MCF 10A (cell line): ENCODE measurements at regions of chr12 and their contacts with region 1.

Region 1: DNA sequence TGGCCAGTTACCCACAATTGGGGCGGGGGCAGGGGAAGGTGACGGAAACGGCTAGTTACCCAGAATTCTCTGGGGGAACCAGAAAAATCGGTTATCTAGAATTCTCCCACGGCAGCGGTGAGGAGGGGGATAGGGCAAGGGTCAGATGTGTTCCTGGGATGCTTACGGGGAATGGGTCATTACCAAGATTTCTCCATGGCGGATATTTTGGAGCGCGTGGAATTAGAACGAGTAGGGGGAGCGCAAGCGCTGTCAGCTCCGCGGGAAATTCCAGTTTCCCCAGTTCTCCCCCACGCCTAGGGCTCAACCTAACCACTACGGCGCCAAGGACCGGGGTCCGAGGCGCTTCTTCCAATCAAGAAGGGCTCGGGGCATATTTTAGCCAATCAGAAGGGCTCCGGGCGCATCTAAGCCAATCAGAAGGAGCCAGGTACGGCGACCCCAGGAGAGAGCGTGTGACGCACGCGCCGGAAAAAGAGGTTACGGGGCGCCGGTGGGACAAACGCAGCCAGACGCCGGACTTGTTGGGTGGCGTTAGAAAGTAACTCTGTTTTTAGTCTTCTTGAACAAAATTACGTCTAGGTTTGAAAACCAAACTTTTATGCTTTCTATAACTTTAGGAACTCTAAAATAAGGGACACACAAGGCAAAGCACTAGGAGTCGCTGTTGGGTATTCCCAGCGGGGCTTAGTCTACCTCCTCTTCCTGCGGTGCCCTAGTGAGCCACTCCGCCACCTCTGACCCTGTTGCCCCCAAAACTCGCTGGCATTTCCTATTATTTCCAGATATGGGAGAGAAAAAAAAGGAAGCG is at the start of gene PAN2:
- DNase-seq: peak; percentile 99
- H3K4me3 Mint-ChIP-seq: peak within 1 kb of the TSS; percentile 83
- H3K27ac Mint-ChIP-seq: peak within 1 kb of the TSS; percentile 98
- H3K4me1 Mint-ChIP-seq: peaks cover 21% of the 10 kb centered on the region
- H3K27me3 Mint-ChIP-seq: no peaks in the 10 kb centered on the region
- CTCF ChIP-seq: peak; percentile 60
- total RNA-seq, gene PAN2: 72.9 and 80.1 TPM in 2 replicates

Region 2: DNA sequence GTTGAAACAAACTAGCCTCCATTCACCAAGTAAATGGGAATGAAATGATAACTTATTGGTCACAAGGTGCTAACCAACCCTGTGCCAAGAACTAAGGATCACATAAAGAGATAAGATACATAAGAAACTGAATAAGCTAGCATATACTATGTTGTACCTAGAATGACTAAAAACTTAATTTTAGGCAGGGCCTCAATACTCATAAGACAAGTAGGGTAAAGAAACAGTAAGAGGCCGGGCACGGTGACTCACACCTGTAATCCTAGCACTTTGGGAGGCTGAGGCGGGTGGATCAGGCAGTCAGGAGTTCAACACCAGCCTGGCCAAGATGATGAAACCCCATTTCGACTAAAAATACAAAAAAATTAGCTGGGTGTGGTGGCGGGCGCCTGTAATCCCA is 573.2 kb before region 1 on chr12:
- CTCF ChIA-PET with region 1: no interaction called
- POLR2A ChIA-PET with region 1: no interaction called
- intact Hi-C with region 1: no loop called
- DNase-seq: no peak
- H3K4me3 Mint-ChIP-seq: no peak overlapping the region
- H3K27ac Mint-ChIP-seq: no peak overlapping the region
- H3K4me1 Mint-ChIP-seq: peaks cover 6% of the 10 kb centered on the region
- H3K27me3 Mint-ChIP-seq: no peaks in the 10 kb centered on the region
- CTCF ChIP-seq: no peak

Region 3: DNA sequence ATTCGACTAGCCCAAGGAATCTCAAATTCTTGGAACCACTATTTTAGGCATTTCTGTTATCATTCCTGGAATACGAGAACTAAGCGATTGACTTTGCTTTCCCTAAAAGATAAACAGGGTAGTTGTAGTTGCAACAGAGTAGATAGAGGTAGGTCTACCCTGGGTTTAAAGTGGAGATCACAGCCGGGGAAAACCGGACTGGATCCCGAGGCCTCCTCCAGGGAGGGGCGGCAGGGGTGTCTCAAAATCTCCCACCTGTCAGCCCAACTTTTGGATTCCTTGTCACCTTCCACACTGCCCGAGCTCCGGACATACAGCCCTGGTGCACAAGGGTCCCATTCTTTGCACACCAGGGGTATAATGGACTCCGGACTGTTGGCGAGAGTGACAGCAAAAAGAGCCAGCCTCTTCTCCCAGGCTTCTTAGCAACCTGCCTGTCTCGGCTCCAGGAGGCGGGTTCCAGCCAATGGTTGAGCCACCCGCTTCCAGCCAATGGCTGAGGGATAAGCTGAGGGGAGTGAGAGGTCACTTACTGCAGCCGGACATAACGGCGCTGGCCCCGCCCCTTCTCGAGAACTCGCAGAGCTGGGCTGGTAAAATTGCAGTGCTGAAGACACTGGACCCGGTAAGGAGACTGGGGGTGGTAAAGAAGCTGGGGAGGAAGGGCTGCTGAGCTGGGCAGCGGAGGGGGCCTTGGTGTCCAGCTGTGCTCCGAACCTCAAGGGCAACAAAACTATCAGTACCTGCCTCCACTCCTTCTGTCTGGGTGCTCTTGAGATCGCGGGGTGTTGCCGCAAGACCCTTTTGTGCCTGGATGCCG is 337.0 kb before region 1 on chr12 and contains the start of gene SUOX:
- CTCF ChIA-PET with region 1: no interaction called
- POLR2A ChIA-PET with region 1: no interaction called
- intact Hi-C with region 1: no loop called
- DNase-seq: peak; percentile 98
- H3K4me3 Mint-ChIP-seq: peak within 1 kb of the TSS; percentile 92
- H3K27ac Mint-ChIP-seq: peak within 1 kb of the TSS; percentile 28
- H3K4me1 Mint-ChIP-seq: peaks cover 12% of the 10 kb centered on the region
- H3K27me3 Mint-ChIP-seq: no peaks in the 10 kb centered on the region
- CTCF ChIP-seq: no peak
- total RNA-seq, gene SUOX: 6.3 and 7.9 TPM in 2 replicates

Region 4: GRCh38 chr12:56256326-56256960 is 77.4 kb before region 1 on chr12:
- CTCF ChIA-PET with region 1: no interaction called
- POLR2A ChIA-PET with region 1: no interaction called
- intact Hi-C with region 1: no loop called
- DNase-seq: peak; percentile 38
- H3K4me3 Mint-ChIP-seq: peak overlapping the region; percentile 84
- H3K27ac Mint-ChIP-seq: peak overlapping the region; percentile 8
- H3K4me1 Mint-ChIP-seq: peaks cover 21% of the 10 kb centered on the region
- H3K27me3 Mint-ChIP-seq: no peaks in the 10 kb centered on the region
- CTCF ChIP-seq: no peak

Region 5: GRCh38 chr12:56266693-56267442 is 67.0 kb before region 1 on chr12 and contains the start of gene COQ10A:
- CTCF ChIA-PET with region 1: interaction called, 12 read pairs
- POLR2A ChIA-PET with region 1: interaction called, 6 read pairs
- intact Hi-C with region 1: no loop called
- DNase-seq: peak; percentile 84
- H3K4me3 Mint-ChIP-seq: peak within 1 kb of the TSS; percentile 89
- H3K27ac Mint-ChIP-seq: peak within 1 kb of the TSS; percentile 51
- H3K4me1 Mint-ChIP-seq: peaks cover 9% of the 10 kb centered on the region
- H3K27me3 Mint-ChIP-seq: no peaks in the 10 kb centered on the region
- CTCF ChIP-seq: peak; percentile 62
- total RNA-seq, gene COQ10A: 3.6 and 3.8 TPM in 2 replicates

Region 6: DNA sequence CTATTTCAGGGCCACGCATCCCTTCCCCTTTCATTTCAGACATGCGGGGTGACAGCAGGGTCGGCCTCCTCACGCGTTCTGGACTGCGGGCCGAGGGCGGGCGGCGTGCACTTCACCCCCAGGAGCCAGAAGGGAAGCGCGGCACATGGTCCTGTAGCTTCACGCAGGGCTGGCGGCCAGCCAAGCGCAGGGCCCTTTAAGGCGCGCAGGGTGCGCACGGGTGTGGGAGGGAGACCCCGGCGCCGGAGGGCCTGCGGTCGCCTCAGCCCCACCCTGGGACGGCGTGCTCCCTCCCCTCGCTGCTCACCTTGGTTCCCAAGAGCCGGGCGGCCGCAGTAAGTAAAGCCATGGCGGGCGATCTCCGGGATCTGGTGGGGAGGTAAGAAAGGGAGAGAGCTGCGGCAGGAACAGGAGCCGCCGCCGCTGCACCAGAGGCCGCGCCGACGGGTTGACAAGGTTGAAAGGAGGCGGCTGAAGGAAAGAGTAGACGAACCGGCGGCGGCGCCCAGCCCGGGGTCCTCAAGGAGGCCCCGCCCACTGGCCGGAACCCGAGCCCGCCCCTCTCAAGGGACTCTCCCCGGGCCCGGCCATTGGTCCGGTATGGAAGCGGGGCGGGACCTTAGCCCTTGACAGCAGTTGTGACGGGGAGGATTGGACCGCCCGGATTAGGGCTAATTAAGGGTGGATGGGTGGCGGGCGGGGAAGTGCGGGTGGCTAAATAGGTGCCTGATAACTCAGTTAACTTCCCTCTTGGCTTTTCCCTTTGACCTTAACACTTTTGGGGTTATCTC is 33.8 kb before region 1 on chr12 and contains the start of gene CS:
- CTCF ChIA-PET with region 1: interaction called, 3 read pairs
- POLR2A ChIA-PET with region 1: interaction called, 19 read pairs
- intact Hi-C with region 1: no loop called
- DNase-seq: peak; percentile 99
- H3K4me3 Mint-ChIP-seq: peak within 1 kb of the TSS; percentile 95
- H3K27ac Mint-ChIP-seq: peak within 1 kb of the TSS; percentile 84
- H3K4me1 Mint-ChIP-seq: peaks cover 19% of the 10 kb centered on the region
- H3K27me3 Mint-ChIP-seq: no peaks in the 10 kb centered on the region
- CTCF ChIP-seq: no peak
- total RNA-seq, gene CS: 213 and 257 TPM in 2 replicates

Region 7: GRCh38 chr12:56448860-56449621 is 115.2 kb after region 1 on chr12 and contains the start of gene TIMELESS:
- CTCF ChIA-PET with region 1: interaction called, 5 read pairs
- POLR2A ChIA-PET with region 1: interaction called, 13 read pairs
- intact Hi-C with region 1: no loop called
- DNase-seq: peak; percentile 90
- H3K4me3 Mint-ChIP-seq: peak within 1 kb of the TSS; percentile 76
- H3K27ac Mint-ChIP-seq: peak within 1 kb of the TSS; percentile 90
- H3K4me1 Mint-ChIP-seq: peaks cover 8% of the 10 kb centered on the region
- H3K27me3 Mint-ChIP-seq: no peaks in the 10 kb centered on the region
- CTCF ChIP-seq: no peak
- total RNA-seq, gene TIMELESS: 10.1 and 14.0 TPM in 2 replicates